Naive thymus-derived CD4-positive, alpha-beta T cell (primary cell): ENCODE measurements at regions of chr4 and their contacts with region 1.

Region 1: DNA sequence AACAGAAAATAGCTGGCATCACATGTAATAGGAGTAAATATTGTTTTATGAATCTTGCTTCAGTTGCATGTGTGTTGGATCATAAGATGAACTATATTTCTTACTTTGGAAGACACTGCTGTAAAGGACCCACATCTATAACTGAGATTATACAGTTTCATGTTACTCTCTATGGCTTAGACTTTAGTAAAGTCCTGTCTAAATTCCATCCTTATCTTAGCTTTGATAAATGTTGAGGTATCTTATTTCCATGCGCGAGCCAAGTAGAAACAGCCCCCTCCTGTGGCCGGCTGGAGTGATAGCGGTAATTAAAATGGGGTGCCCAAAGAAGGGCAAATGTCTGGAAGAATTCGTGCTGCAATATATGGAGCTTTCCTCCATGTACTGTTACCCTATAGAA is 43.0 kb downstream of the CCDC158 start:
- DNase-seq: peak in 7 of 9 donors; percentile 7 to 41 (median 25)
- ATAC-seq: peak; percentile 63
- H3K4me3 ChIP-seq: no peak overlapping the region
- H3K4me3 Mint-ChIP-seq: peak overlapping the region in 1 of 10 donors; percentile 16
- H3K27ac ChIP-seq: no peak overlapping the region
- H3K27ac Mint-ChIP-seq: no peak overlapping the region
- H3K4me1 ChIP-seq: no peaks in the 10 kb centered on the region
- H3K4me1 Mint-ChIP-seq: peaks cover 0 to 6% (median 0%) of the 10 kb centered on the region in 7 donors
- H3K27me3 ChIP-seq: no peaks in the 10 kb centered on the region
- H3K27me3 Mint-ChIP-seq: peaks cover 0 to 10% (median 0%) of the 10 kb centered on the region in 5 donors

Region 2: GRCh38 chr4:76179398-76180318 is 198.3 kb before region 1 on chr4:
- CTCF ChIA-PET with region 1: interaction called, 84 read pairs
- POLR2A ChIA-PET with region 1: interaction called, 6 read pairs
- intact Hi-C with region 1: loop called (anchors 1 kb)
- DNase-seq: peak; percentile 63 to 82 (median 72)
- ATAC-seq: peak; percentile 95
- H3K4me3 ChIP-seq: no peak overlapping the region
- H3K4me3 Mint-ChIP-seq: no peak overlapping the region
- H3K27ac ChIP-seq: no peak overlapping the region
- H3K27ac Mint-ChIP-seq: peak overlapping the region in 2 of 9 donors; percentile 27 to 53
- H3K4me1 ChIP-seq: no peaks in the 10 kb centered on the region
- H3K4me1 Mint-ChIP-seq: peaks cover 0 to 3% (median 0%) of the 10 kb centered on the region in 7 donors
- H3K27me3 ChIP-seq: no peaks in the 10 kb centered on the region
- H3K27me3 Mint-ChIP-seq: no peaks in the 10 kb centered on the region

Region 3: GRCh38 chr4:76251441-76252270 is 126.3 kb before region 1 on chr4 and contains the start of gene FAM47E:
- CTCF ChIA-PET with region 1: interaction called, 6 read pairs
- POLR2A ChIA-PET with region 1: no interaction called
- intact Hi-C with region 1: loop called in 1 of 2 experiments (anchors 1 kb)
- DNase-seq: peak; percentile 7 to 34 (median 26)
- ATAC-seq: peak; percentile 86
- H3K4me3 ChIP-seq: peak within 1 kb of the TSS; percentile 51
- H3K4me3 Mint-ChIP-seq: peak within 1 kb of the TSS; percentile 73 to 89 (median 82)
- H3K27ac ChIP-seq: no peak within 1 kb of the TSS
- H3K27ac Mint-ChIP-seq: peak within 1 kb of the TSS in 1 of 9 donors; percentile 32
- H3K4me1 ChIP-seq: no peaks in the 10 kb centered on the region
- H3K4me1 Mint-ChIP-seq: peaks cover 4 to 10% (median 7%) of the 10 kb centered on the region in 7 donors
- H3K27me3 ChIP-seq: peaks cover 9 to 11% of the 10 kb centered on the region in 2 donors
- H3K27me3 Mint-ChIP-seq: peaks cover 69 to 83% (median 75%) of the 10 kb centered on the region in 5 donors
- total RNA-seq, gene FAM47E: 0.24 to 0.79 (median 0.43) TPM in 4 of 5 experiments, not detected in the other

Region 4: DNA sequence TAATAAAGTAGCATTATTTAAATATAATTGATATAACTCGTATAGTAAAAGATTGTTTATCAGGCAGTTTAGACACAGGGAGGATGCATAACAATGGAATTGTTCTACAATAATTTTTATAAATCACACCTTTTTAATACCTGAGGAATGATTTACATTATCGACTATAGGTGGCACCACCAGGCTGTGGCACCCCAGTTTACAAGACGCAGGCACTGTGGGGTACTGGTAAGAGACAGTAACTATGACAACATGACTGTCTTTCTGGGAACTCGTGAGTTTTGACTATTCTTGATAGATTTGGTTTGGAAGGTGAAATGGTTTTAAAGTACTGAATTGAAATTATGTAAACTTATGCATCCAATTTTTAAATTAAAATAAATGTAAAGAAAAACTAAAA is 98.4 kb before region 1 on chr4:
- CTCF ChIA-PET with region 1: interaction called, 20 read pairs
- POLR2A ChIA-PET with region 1: no interaction called
- intact Hi-C with region 1: loop called (anchors 1 kb)
- DNase-seq: peak in 4 of 9 donors; percentile 14 to 46 (median 34)
- ATAC-seq: peak; percentile 63
- H3K4me3 ChIP-seq: no peak overlapping the region
- H3K4me3 Mint-ChIP-seq: no peak overlapping the region
- H3K27ac ChIP-seq: no peak overlapping the region
- H3K27ac Mint-ChIP-seq: no peak overlapping the region
- H3K4me1 ChIP-seq: no peaks in the 10 kb centered on the region
- H3K4me1 Mint-ChIP-seq: peaks cover 0 to 5% (median 0%) of the 10 kb centered on the region in 7 donors
- H3K27me3 ChIP-seq: no peaks in the 10 kb centered on the region
- H3K27me3 Mint-ChIP-seq: peaks cover 12 to 27% (median 19%) of the 10 kb centered on the region in 5 donors

Region 5: GRCh38 chr4:76305971-76306881 is 71.7 kb before region 1 on chr4 and contains the start of gene STBD1:
- CTCF ChIA-PET with region 1: interaction called, 11 read pairs
- POLR2A ChIA-PET with region 1: no interaction called
- intact Hi-C with region 1: no loop called
- DNase-seq: peak in 7 of 9 donors; percentile 5 to 54 (median 19)
- ATAC-seq: peak; percentile 68
- H3K4me3 ChIP-seq: peak within 1 kb of the TSS; percentile 62
- H3K4me3 Mint-ChIP-seq: peak within 1 kb of the TSS; percentile 75 to 92 (median 82)
- H3K27ac ChIP-seq: peak within 1 kb of the TSS; percentile 20
- H3K27ac Mint-ChIP-seq: peak within 1 kb of the TSS in 7 of 9 donors; percentile 22 to 83 (median 63)
- H3K4me1 ChIP-seq: peaks cover 18% of the 10 kb centered on the region in 2 donors
- H3K4me1 Mint-ChIP-seq: peaks cover 20 to 37% (median 32%) of the 10 kb centered on the region in 7 donors
- H3K27me3 ChIP-seq: no peaks in the 10 kb centered on the region
- H3K27me3 Mint-ChIP-seq: peaks cover 0 to 42% (median 5%) of the 10 kb centered on the region in 5 donors
- total RNA-seq, gene STBD1: 0.62 to 2.1 (median 0.85) TPM in 4 of 5 experiments, not detected in the other